A673 (cell line): ENCODE measurements at regions of chr20 and their contacts with region 1.

Region 1: GRCh38 chr20:55830121-55830827 is 175.0 kb downstream of the CBLN4 start:
- DNase-seq: no peak
- H3K4me3 ChIP-seq: no peak overlapping the region
- H3K27ac ChIP-seq: no peak overlapping the region
- H3K4me1 ChIP-seq: no peaks in the 10 kb centered on the region
- H3K27me3 ChIP-seq: no peaks in the 10 kb centered on the region
- CTCF ChIP-seq: no peak

Region 2: GRCh38 chr20:55360895-55361294 is 469.4 kb before region 1 on chr20:
- CTCF ChIA-PET with region 1: no interaction called
- POLR2A ChIA-PET with region 1: no interaction called
- intact Hi-C with region 1: no loop called
- DNase-seq: no peak
- H3K4me3 ChIP-seq: no peak overlapping the region
- H3K27ac ChIP-seq: no peak overlapping the region
- H3K4me1 ChIP-seq: no peaks in the 10 kb centered on the region
- H3K27me3 ChIP-seq: no peaks in the 10 kb centered on the region
- CTCF ChIP-seq: no peak

Region 3: GRCh38 chr20:56004007-56004406 is 173.7 kb after region 1 on chr20:
- CTCF ChIA-PET with region 1: no interaction called
- POLR2A ChIA-PET with region 1: no interaction called
- intact Hi-C with region 1: loop called (anchors 5 kb)
- DNase-seq: no peak
- H3K4me3 ChIP-seq: no peak overlapping the region
- H3K27ac ChIP-seq: no peak overlapping the region
- H3K4me1 ChIP-seq: no peaks in the 10 kb centered on the region
- H3K27me3 ChIP-seq: no peaks in the 10 kb centered on the region
- CTCF ChIP-seq: no peak